CD4-positive, alpha-beta T cell (primary cell): ENCODE measurements at regions of chr16 and their contacts with region 1.

Region 1: DNA sequence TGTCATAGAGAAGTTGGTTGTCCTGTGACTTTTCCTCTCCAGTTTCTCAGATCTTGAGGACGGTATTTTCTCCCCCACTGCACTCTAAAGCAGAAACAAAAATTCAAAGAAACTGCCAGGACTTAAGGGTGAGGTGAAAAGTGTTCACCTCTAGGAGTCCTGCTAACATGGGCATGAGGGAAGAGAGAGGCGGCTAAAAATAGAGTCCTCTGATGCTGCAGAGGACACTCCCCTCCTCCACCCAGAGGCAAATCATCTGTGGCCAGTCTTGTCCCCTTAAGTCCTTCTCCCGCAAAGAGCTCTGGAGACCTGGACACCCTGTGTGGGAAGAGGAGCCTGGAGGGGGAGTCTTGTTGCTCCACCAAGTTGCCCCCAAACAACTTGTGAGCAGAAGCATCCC is 4.7 kb upstream of the DDX19A start:
- DNase-seq: no peak
- ATAC-seq: no peak
- H3K4me3 ChIP-seq: no peak overlapping the region
- H3K4me3 Mint-ChIP-seq: no peak overlapping the region
- H3K27ac ChIP-seq: no peak overlapping the region
- H3K27ac Mint-ChIP-seq: no peak overlapping the region
- H3K4me1 ChIP-seq: peaks cover 13% of the 10 kb centered on the region
- H3K4me1 Mint-ChIP-seq: peaks cover 13% of the 10 kb centered on the region
- H3K27me3 ChIP-seq: no peaks in the 10 kb centered on the region
- H3K27me3 Mint-ChIP-seq: no peaks in the 10 kb centered on the region
- CTCF ChIP-seq: no peak

Region 2: DNA sequence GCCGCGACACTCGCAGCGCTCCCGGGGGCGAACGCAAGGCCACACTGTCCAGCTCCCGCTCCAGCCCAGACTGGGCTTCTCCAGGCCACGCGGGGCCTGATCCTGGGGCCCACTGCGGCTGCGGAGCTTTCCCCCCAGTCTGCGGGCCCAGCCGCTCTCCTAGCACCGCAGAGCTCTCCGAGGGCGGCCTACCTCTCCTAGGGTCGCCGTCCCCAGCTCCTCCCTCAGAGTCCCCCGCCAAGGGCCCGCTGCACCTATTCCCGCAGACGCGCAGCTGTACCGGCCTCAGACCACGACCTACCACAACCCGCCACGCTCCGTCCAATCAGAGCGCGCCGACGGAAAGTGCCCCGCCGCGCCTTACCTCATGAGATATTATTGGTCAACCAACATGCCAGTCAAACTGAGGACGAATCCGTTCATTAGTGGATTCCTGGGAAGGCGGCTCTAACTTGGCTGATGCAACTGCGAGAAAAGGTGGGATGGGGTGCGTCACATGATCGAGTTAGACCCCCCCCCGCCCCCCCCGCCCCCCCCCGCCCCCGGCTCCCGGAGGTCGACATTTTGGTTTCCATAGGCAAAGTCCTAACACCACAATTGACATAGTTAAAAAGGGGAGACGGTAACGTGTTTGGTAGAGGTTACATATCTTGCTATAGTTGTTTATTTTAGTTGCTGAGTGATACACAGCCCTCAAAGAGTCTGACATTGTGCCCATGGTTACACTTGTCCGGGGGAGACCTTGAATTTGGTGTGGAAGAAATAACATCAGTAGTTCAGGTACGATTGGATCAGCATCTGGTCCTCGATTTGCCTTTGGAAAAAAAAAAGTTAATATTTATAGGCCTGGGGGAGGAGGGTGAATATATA is 52.6 kb before region 1 on chr16 and contains the start of gene AARS1:
- CTCF ChIA-PET with region 1: interaction called, 3 read pairs
- POLR2A ChIA-PET with region 1: interaction called, 44 read pairs
- intact Hi-C with region 1: loop called (anchors 2 kb)
- DNase-seq: peak; percentile 86 to 99 (median 90)
- ATAC-seq: peak; percentile 94
- H3K4me3 ChIP-seq: peak within 1 kb of the TSS; percentile 95
- H3K4me3 Mint-ChIP-seq: peak within 1 kb of the TSS; percentile 96
- H3K27ac ChIP-seq: peak within 1 kb of the TSS; percentile 74 to 86
- H3K27ac Mint-ChIP-seq: peak within 1 kb of the TSS; percentile 91
- H3K4me1 ChIP-seq: peaks cover 22% of the 10 kb centered on the region
- H3K4me1 Mint-ChIP-seq: peaks cover 21% of the 10 kb centered on the region
- H3K27me3 ChIP-seq: no peaks in the 10 kb centered on the region
- H3K27me3 Mint-ChIP-seq: no peaks in the 10 kb centered on the region
- CTCF ChIP-seq: no peak
- total RNA-seq, gene AARS1: 10.3 to 11.1 TPM

Region 3: DNA sequence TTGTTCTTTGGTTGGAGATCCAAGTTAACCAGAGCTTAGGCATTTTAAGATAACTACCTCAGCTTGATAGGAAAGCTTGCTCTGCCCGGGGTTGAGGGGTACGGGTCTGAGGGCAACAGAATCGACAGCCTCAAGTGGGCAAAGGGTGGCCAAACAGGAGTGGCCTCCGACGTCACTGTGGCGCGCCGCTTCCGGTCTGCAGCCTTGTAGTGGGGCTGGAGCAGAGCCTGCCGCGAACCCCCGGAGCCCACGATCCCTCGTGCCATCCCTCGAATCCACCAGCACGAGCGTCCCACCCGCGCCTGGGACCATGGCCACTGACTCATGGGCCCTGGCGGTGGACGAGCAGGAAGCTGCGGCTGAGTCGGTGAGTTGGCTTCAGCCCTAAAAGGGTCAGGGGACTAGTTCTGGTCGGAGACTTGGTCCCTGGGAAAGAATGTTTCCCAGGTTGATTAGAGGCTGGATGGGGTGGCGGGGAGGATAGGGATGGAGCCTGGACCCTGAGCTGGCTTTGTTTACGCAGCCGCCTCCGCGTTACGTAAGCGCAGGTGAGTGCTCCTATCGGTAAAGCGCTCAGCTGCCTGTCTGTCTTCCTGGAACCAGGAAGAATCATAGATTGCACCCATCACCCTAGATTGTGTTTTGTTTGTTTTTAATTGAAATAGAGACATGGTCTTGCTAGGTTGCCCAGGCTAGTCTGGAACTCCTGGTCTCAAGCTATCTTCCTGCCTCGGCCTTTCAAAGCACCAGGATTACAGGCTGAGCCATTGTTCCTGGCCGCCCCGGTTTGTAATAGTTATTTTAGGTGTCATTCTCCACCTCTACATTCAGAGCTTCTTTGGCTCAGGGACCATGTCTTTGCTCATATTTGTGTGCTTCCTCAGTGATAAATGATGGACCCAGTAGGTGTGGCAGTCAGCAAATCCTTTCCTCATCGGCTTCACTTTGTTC is 42.8 kb before region 1 on chr16 and contains the start of gene DDX19B:
- CTCF ChIA-PET with region 1: interaction called, 5 read pairs
- POLR2A ChIA-PET with region 1: interaction called, 60 read pairs
- intact Hi-C with region 1: loop called in 1 of 2 experiments (anchors 2 kb)
- DNase-seq: peak; percentile 33 to 78 (median 48)
- ATAC-seq: peak; percentile 88
- H3K4me3 ChIP-seq: peak within 1 kb of the TSS; percentile 88
- H3K4me3 Mint-ChIP-seq: peak within 1 kb of the TSS; percentile 96
- H3K27ac ChIP-seq: peak within 1 kb of the TSS; percentile 88 to 97
- H3K27ac Mint-ChIP-seq: peak within 1 kb of the TSS; percentile 98
- H3K4me1 ChIP-seq: peaks cover 25% of the 10 kb centered on the region
- H3K4me1 Mint-ChIP-seq: peaks cover 45% of the 10 kb centered on the region
- H3K27me3 ChIP-seq: no peaks in the 10 kb centered on the region
- H3K27me3 Mint-ChIP-seq: no peaks in the 10 kb centered on the region
- CTCF ChIP-seq: no peak
- total RNA-seq, gene DDX19B: 23.0 TPM

Region 4: DNA sequence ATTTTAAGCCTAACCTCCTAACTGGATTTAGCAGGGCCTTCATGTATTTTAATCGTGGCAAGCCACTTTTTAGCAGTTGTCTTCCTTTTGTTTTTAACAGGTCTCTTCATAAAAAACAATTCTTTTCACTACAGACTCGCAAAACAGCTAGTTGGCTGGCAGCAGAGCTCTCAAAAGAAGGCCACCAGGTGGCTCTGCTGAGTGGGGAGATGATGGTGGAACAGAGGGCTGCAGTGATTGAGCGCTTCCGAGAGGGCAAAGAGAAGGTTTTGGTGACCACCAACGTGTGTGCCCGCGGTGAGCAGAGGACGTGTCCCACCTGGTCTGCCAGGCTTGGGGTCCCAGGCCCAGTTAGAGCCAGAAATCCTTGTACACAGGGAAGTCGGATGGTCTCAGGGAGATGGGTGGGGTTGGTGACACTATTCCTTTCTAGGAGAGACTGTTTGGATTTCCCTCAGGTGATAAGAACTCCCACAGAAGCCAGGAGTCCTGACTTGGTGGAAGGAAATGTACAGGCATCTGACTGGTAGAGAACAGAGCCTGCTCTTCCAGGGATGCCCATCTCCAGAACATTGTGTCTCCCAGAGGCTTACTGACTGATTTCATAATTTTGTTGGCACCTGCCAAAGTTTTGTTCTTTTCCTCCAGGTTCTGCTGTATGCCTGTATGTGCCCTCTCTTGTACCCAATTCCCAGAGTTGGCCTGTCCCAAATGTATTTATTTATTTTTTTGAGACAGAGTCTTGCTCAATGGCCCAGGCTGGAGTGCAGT is 10.2 kb before region 1 on chr16:
- CTCF ChIA-PET with region 1: no interaction called
- POLR2A ChIA-PET with region 1: interaction called, 11 read pairs
- intact Hi-C with region 1: no loop called
- DNase-seq: peak in 7 of 14 experiments; percentile 5 to 33 (median 15)
- ATAC-seq: peak; percentile 68
- H3K4me3 ChIP-seq: no peak overlapping the region
- H3K4me3 Mint-ChIP-seq: no peak overlapping the region
- H3K27ac ChIP-seq: no peak overlapping the region
- H3K27ac Mint-ChIP-seq: no peak overlapping the region
- H3K4me1 ChIP-seq: no peaks in the 10 kb centered on the region
- H3K4me1 Mint-ChIP-seq: no peaks in the 10 kb centered on the region
- H3K27me3 ChIP-seq: no peaks in the 10 kb centered on the region
- H3K27me3 Mint-ChIP-seq: no peaks in the 10 kb centered on the region
- CTCF ChIP-seq: peak; percentile 58

Region 5: DNA sequence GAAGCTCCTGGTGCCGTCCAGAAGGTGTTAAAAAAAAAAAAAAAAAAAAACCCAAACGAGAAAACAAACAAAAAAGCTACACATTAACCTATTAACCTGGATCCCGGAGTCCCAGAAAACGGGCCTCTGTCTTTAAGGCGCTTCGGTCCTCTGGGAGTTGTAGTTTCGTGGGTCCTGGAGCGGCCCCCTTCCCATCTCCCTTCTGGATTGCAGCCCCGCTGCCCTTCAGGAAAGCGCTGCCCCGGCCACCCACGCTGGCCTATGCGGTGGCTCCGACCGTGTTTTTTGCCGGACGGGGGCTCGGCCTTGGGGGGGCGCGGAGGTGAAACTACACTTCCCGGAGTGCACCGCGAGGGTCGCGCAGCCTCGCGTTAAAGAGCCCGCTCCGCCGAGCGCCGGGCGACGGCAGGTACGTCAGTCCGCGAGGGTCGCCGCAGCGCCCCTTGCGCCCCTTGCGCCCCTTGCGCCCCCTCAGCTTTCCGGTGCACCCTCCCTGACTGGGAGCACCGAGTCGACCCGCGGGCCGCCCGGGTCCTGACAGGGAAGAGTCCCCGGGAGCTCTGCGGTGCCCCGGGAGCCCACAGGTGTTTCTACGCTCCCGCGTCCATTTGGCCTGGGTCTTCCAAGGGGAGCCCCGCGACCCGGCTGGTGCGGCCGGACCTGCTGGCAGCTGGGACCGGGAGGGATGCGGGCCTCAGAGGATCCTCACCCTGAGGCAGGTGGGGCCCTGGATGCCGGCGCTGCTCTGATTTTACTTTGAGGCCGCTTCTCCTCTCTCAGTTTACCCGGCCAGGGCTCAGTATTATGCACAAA is 112.4 kb after region 1 on chr16 and contains the start of gene FCSK:
- CTCF ChIA-PET with region 1: no interaction called
- POLR2A ChIA-PET with region 1: interaction called, 19 read pairs
- intact Hi-C with region 1: loop called in 1 of 2 experiments (anchors 1 kb)
- DNase-seq: peak; percentile 50 to 85 (median 59)
- ATAC-seq: peak; percentile 91
- H3K4me3 ChIP-seq: peak within 1 kb of the TSS; percentile 93
- H3K4me3 Mint-ChIP-seq: peak within 1 kb of the TSS; percentile 90
- H3K27ac ChIP-seq: peak within 1 kb of the TSS; percentile 89 to 95
- H3K27ac Mint-ChIP-seq: peak within 1 kb of the TSS; percentile 61
- H3K4me1 ChIP-seq: peaks cover 21% of the 10 kb centered on the region
- H3K4me1 Mint-ChIP-seq: peaks cover 23% of the 10 kb centered on the region
- H3K27me3 ChIP-seq: no peaks in the 10 kb centered on the region
- H3K27me3 Mint-ChIP-seq: no peaks in the 10 kb centered on the region
- CTCF ChIP-seq: no peak
- total RNA-seq, gene FCSK: 21.8 to 25.4 TPM